ENCODE measurements at regions of chr1 and their contacts with region 1.

Region 1: DNA sequence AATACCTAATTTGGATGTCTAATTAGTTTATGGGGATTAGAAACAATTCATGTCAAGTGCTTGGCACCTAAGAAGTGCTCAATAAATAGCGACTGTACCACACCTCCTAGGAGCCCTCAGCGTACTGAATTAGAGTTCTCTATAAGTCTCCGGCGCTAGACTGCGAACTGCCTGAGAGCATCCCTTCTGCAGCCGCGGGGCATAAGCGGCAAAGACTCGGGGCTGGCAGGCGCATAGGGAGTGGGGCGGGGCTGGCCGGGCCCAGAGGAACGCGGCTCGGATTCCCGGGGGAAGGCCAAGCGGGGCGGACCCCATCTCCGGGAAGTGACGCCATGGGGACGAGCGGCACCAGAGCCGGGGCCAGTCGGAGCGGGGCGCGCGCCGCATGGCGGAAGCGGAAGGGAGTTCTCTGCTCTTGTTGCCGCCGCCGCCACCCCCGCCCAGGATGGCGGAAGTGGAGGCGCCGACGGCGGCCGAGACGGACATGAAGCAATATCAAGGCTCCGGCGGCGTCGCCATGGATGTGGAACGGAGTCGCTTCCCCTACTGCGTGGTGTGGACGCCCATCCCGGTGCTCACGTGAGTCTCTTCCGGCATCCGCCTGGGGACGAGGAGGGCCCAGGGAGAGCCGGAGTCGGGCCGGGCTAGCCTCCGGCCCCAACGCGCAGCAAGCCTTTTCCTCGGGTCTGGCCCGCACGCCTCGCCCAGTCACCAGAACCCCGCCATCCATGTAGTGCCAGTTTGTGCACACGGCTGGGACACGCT is at the start of gene TMEM222:
- DNase-seq: peak; percentile 99
- ATAC-seq: peak; percentile 95
- H3K4me3 Mint-ChIP-seq: peak within 1 kb of the TSS; percentile 97
- H3K27ac Mint-ChIP-seq: peak within 1 kb of the TSS; percentile 93
- H3K4me1 Mint-ChIP-seq: peaks cover 51% of the 10 kb centered on the region
- H3K27me3 Mint-ChIP-seq: no peaks in the 10 kb centered on the region
- CTCF ChIP-seq: no peak
- total RNA-seq, gene TMEM222: 39.3 and 43.0 TPM in 2 replicates

Region 2: DNA sequence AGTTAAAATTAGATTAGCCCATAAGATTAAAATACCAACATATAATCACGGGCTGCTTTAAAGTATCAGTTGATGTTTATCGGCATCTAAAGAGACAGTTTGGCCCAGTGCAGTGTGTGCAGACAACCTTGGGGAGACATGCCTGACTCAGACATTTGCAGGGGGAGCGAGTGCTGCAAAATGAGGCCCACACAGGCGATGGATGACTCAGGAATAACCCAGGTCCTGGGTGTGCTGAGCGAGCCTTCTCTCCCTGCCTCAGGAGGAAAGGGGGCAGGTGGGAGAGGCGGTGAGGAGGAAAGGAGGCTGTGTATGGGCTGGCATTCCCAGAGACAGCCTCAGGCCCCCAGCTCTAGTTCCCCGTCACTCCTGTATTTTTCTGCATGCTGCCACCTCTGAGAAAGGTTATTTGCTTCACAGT is 176.1 kb before region 1 on chr1:
- CTCF ChIA-PET with region 1: no interaction called
- POLR2A ChIA-PET with region 1: no interaction called
- intact Hi-C with region 1: no loop called
- DNase-seq: no peak
- ATAC-seq: no peak
- H3K4me3 Mint-ChIP-seq: no peak overlapping the region
- H3K27ac Mint-ChIP-seq: no peak overlapping the region
- H3K4me1 Mint-ChIP-seq: peaks cover 30% of the 10 kb centered on the region
- H3K27me3 Mint-ChIP-seq: no peaks in the 10 kb centered on the region
- CTCF ChIP-seq: no peak

Region 3: DNA sequence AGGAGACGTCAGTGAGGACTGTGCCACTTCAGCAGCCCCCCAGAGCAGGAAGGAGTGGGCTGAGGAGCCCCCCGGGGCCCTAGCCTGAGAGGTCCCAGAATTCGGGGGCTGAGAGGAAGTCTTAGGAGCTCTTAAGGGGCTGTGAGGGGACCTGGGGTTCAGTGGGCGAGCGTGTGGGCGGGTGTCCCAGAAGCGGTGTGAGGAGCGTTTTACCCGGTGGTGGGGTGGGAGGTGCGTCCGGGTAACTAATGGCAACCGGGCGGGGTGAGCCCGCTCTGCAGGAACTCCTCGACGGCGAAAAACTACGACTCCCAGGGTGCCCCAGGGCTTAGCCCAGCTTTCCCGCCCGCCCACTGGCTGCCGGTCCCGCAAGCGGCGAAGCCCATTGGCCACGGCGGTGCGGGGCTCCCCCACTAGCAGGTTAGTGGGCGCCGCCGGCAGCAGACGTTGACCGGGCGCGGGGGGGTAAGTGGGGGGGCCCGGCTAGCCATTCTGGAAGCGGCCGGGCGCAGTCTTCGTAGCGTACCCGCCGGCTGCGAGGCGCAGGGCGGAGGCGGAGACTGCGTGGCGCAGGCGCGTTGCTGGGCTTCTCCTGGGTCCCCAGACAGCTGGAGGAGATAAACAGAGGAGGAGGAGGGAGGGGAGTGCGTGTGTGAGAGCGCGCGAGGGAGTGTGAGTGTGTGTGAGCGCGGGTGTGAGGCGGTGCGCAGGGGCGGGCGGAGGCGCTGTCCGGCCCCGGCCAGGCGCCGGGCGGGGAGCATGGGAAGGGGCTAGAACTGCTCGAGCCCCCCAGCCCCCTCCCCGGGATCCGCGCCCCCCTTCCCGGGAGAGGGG is 87.7 kb before region 1 on chr1 and contains the start of gene WDTC1:
- CTCF ChIA-PET with region 1: no interaction called
- POLR2A ChIA-PET with region 1: interaction called, 4 read pairs
- intact Hi-C with region 1: loop called (anchors 1 kb)
- DNase-seq: peak; percentile 94
- ATAC-seq: peak; percentile 91
- H3K4me3 Mint-ChIP-seq: peak within 1 kb of the TSS; percentile 98
- H3K27ac Mint-ChIP-seq: peak within 1 kb of the TSS; percentile 90
- H3K4me1 Mint-ChIP-seq: peaks cover 30% of the 10 kb centered on the region
- H3K27me3 Mint-ChIP-seq: no peaks in the 10 kb centered on the region
- CTCF ChIP-seq: no peak
- total RNA-seq, gene WDTC1: 62.8 and 65.1 TPM in 2 replicates

Region 4: GRCh38 chr1:27332536-27333281 is 10.7 kb after region 1 on chr1:
- CTCF ChIA-PET with region 1: interaction called, 10 read pairs
- POLR2A ChIA-PET with region 1: interaction called, 6 read pairs
- intact Hi-C with region 1: no loop called
- DNase-seq: peak; percentile 49
- ATAC-seq: peak; percentile 92
- H3K4me3 Mint-ChIP-seq: no peak overlapping the region
- H3K27ac Mint-ChIP-seq: no peak overlapping the region
- H3K4me1 Mint-ChIP-seq: peaks cover 34% of the 10 kb centered on the region
- H3K27me3 Mint-ChIP-seq: no peaks in the 10 kb centered on the region
- CTCF ChIP-seq: no peak

Region 5: GRCh38 chr1:27341525-27342252 is 19.7 kb after region 1 on chr1 and contains the start of gene SYTL1:
- CTCF ChIA-PET with region 1: interaction called, 3 read pairs
- POLR2A ChIA-PET with region 1: interaction called, 11 read pairs
- intact Hi-C with region 1: loop called (anchors 1 kb)
- DNase-seq: peak; percentile 72
- ATAC-seq: peak; percentile 76
- H3K4me3 Mint-ChIP-seq: peak within 1 kb of the TSS; percentile 80
- H3K27ac Mint-ChIP-seq: peak within 1 kb of the TSS; percentile 87
- H3K4me1 Mint-ChIP-seq: peaks cover 67% of the 10 kb centered on the region
- H3K27me3 Mint-ChIP-seq: no peaks in the 10 kb centered on the region
- CTCF ChIP-seq: no peak
- total RNA-seq, gene SYTL1: 76.0 and 81.9 TPM in 2 replicates

Region 6: GRCh38 chr1:27365372-27366112 is 43.5 kb after region 1 on chr1:
- CTCF ChIA-PET with region 1: no interaction called
- POLR2A ChIA-PET with region 1: interaction called, 9 read pairs
- intact Hi-C with region 1: loop called (anchors 2 kb)
- DNase-seq: peak; percentile 68
- ATAC-seq: peak; percentile 71
- H3K4me3 Mint-ChIP-seq: peak overlapping the region; percentile 91
- H3K27ac Mint-ChIP-seq: peak overlapping the region; percentile 68
- H3K4me1 Mint-ChIP-seq: peaks cover 55% of the 10 kb centered on the region
- H3K27me3 Mint-ChIP-seq: no peaks in the 10 kb centered on the region
- CTCF ChIP-seq: no peak

Region 7: DNA sequence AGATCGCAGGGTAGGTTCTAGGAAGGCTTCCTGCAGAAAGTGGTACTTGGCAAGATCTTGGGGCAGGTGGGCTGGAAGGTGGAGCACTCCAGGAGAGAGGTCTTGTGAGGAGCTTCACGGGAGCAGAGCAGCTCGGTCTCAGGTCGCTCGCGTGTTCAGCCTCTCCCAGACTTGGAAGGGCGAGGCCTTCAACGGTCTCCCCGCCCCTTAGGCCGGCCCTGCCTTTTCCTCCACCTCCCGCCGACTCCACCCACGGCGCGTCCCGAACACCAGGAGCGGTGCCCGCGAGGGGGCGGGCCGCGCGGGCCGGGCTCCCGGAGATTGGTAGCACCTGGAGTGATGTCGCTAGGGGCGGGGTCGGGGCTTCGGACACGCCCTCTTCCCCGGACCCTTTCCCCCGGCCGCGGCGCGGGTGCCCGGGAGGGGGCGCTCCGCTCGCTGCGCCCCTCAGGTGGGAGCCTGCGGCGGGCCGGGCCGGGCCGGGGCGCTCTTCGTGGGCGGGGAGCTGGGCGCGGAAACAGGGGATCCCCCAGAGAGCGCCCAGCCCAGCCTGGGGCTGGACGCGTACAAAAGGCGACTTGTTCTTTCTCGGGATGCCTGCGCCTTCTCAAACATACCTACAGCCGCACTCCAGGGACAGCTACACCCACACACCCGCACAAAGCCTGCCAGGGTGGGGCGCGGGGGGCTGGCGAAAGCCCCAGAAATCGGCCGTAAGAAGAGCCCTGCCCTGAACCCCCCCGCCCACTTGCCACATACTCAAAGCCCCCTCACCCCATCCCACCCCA is 246.5 kb after region 1 on chr1:
- CTCF ChIA-PET with region 1: no interaction called
- POLR2A ChIA-PET with region 1: interaction called, 10 read pairs
- intact Hi-C with region 1: no loop called
- DNase-seq: peak; percentile 94
- ATAC-seq: peak; percentile 91
- H3K4me3 Mint-ChIP-seq: peak overlapping the region; percentile 73
- H3K27ac Mint-ChIP-seq: no peak overlapping the region
- H3K4me1 Mint-ChIP-seq: peaks cover 33% of the 10 kb centered on the region
- H3K27me3 Mint-ChIP-seq: no peaks in the 10 kb centered on the region
- CTCF ChIP-seq: no peak

Measured in activated B cell treated with CpG ODN at 0.5 μM for 24 hours (primary cell).